ENCODE measurements at regions of chr2 and their contacts with region 1.

Region 1: DNA sequence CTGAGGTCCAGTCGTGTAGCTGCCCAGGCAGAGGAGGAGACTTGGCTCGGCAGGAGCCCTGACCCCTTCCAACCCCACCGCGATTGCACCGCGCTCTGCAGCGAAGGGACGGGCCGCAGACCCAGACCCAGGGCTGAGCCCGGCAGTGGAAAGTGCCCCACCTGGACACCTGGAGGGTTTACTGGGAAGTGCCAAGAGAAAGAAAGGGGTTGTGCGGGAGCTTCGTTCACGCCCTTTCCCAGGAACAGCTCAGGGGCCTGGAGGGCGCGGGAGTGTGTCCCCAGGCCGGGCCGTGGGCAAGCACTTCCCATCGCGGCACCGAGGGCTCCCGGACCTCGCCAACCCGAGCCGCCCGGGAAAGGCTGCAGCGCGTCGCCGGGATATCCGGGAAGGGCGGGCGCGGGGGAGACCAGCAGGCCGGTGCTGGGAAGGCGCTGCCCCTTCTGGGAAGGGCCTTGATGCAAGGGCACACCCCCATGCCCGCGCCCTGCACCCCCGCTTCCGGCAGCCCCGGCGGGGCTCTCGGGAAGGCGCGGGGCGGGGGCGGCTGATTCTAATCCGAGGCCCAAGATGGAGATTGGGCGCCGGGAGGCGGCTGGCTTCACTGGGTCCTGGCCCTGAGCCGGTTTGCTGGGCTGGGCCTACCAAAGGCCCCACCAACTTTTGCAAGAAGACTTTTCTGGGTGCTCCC is 36.1 kb upstream of the MRPL33 start:
- DNase-seq: peak; percentile 93 to 95
- ATAC-seq: peak; percentile 96
- H3K4me3 ChIP-seq: peak overlapping the region in 1 of 2 donors; percentile 1
- H3K27ac ChIP-seq: peak overlapping the region; percentile 85 to 89
- H3K4me1 ChIP-seq: no peaks in the 10 kb centered on the region
- H3K27me3 ChIP-seq: no peaks in the 10 kb centered on the region

Region 2: GRCh38 chr2:27723372-27724144 is 11.8 kb before region 1 on chr2:
- intact Hi-C with region 1: loop called in 1 of 2 experiments (anchors 1 kb)
- DNase-seq: peak; percentile 79 to 83
- ATAC-seq: peak; percentile 78
- H3K4me3 ChIP-seq: no peak overlapping the region
- H3K27ac ChIP-seq: peak overlapping the region; percentile 95 to 97
- H3K4me1 ChIP-seq: peaks cover 2 to 6% of the 10 kb centered on the region in 2 donors
- H3K27me3 ChIP-seq: no peaks in the 10 kb centered on the region

Region 3: GRCh38 chr2:27771548-27772335 is 36.3 kb after region 1 on chr2 and contains the start of gene MRPL33:
- intact Hi-C with region 1: loop called in 1 of 2 experiments (anchors 5 kb)
- DNase-seq: peak; percentile 97 to 99
- ATAC-seq: peak; percentile 97
- H3K4me3 ChIP-seq: peak within 1 kb of the TSS; percentile 51
- H3K27ac ChIP-seq: peak within 1 kb of the TSS; percentile 73 to 86
- H3K4me1 ChIP-seq: peaks cover 6 to 10% of the 10 kb centered on the region in 2 donors
- H3K27me3 ChIP-seq: no peaks in the 10 kb centered on the region
- total RNA-seq, gene MRPL33: 85.0 to 116 TPM

Measured in aorta (tissue), 5 donors.